ENCODE measurements at regions of chr6 and their contacts with region 1.

Region 1: DNA sequence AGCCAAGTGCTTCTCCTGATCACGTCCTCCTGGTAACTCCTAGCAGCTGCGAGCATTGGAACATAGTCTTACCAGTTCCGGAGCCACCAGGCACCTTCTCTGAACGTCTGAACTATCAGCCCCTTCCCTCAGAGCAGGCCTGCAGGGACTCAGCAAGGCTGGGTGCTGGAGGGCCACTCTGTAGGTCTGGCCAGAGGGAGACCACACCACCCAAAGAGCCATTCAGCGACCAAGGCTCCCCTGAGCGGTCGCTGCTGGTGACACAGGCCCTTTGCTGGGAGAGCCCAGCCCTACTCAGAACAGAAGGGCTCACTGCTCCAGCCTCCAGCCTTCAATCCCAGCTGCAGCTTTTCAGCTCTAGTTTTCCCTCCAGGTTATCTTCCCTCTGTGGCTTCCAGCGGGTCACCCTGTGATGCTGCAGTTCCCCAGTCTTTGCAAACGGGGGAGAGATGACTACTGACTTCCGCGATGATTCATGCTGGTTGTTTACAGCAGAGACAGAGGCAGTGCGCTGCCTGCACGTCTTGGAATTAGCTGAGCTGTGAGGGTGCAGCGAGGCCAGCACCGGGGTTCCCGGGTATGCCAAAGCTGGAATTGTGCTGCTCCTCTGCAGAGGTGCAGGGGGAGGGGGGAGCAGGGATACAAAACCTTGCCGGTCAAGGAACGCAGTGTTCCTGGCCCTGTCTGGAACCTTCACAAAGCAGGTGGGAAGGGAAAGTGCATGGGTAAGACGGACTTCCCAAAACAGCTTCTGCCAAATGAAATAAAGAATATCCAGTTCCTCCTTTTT is 161.4 kb downstream of the LY86 start:
- DNase-seq: peak; percentile 68 to 90
- ATAC-seq: peak; percentile 69 to 80 (median 73)
- H3K4me3 ChIP-seq: peak overlapping the region; percentile 56
- H3K27ac ChIP-seq: peak overlapping the region; percentile 95
- H3K4me1 ChIP-seq: peaks cover 49% of the 10 kb centered on the region
- H3K27me3 ChIP-seq: no peaks in the 10 kb centered on the region
- CTCF ChIP-seq: no peak

Region 2: DNA sequence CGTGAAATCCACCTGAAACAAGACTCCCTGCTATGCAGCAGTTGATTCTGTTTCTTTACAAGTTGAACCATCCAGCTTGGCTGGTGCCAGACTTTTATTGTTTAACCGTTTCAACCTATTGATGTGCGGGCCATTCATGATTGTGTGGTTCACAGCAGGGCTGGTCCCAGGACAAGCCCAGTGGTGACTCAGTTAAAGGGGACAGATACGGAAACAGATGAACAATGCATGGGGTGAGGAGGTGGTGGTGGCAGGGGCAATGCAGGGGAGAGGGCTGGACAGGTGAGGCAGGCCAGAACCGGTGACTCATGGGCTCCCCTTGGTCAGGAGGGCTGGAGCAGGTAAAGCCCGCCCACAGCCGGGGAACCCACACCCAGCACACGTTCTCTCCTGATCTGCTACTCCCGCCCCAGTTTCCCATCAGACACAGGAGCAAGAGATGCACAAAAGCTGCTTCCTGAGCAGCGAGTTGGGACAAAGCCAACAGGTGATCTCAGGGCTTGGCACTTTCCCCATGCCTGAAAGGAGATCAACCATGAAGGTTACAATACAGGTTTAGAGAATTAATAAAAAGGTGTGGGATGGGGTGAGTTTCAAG is 70.8 kb after region 1 on chr6:
- intact Hi-C with region 1: loop called (anchors 5 kb)
- DNase-seq: no peak
- ATAC-seq: no peak
- H3K4me3 ChIP-seq: no peak overlapping the region
- H3K27ac ChIP-seq: no peak overlapping the region
- H3K4me1 ChIP-seq: peaks cover 16% of the 10 kb centered on the region
- H3K27me3 ChIP-seq: no peaks in the 10 kb centered on the region
- CTCF ChIP-seq: no peak

Region 3: DNA sequence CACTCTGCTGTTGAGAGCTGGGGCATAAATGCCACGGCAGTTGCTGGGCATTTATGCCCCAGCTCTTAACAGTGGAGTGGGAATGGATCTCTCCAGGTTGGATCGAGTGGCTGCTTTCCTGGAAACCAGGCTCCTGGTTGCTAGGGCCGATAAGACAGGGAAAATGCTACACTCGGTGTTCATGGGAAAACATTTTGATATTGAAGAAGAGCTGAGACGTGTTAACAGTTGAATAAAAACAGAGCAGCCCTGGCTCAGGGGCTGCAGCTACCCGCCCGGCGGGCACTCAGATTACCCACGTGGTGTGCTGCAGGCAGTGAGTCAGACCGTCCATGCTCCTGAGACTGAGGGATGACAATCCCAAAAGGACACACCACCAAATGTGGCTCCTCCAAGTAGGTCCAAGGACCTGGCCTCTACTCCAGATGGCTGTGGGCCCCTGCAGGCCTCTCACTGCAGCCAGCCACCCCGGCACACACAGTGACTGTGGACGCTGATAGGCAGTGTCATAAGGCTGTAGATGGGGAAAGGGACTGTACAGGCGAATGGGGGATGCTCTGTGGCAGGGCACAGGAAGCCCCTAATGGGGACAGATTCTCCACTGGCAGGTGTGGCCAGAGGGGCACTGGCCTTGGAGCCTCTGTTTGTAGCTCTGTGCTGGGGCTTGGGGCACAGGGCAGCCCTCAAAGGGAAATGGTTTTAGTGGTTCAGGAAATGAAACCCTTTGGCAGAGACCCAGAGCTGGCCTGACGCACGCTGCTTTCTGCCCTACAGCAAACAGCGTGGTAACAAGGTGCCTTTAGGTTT is 76.4 kb after region 1 on chr6:
- intact Hi-C with region 1: loop called (anchors 5 kb)
- DNase-seq: peak; percentile 66 to 89
- ATAC-seq: peak; percentile 88 to 92 (median 88)
- H3K4me3 ChIP-seq: peak overlapping the region; percentile 40
- H3K27ac ChIP-seq: peak overlapping the region; percentile 98
- H3K4me1 ChIP-seq: peaks cover 27% of the 10 kb centered on the region
- H3K27me3 ChIP-seq: no peaks in the 10 kb centered on the region
- CTCF ChIP-seq: no peak

Region 4: DNA sequence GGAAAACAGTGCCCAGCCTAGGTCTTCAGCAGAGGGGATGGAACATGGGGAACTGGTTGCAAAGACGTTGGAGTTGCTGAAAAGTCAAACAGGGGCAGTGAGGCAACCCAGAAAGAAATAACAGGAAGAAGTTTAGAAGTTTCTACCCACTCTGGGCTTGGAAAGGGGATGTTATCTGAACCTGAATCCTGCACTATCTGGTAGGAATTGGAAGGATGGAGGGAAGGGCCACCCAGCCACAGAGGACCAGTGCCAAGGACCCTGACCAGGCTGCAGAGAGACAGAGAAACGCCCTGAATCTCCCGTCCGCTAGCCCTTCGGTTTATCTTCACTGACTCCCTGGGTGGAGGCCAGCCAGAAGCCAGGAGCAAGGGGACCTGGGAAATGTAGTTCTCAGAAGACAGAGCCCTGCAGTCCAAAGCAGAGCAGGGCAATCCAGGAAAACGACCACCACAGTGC is 140.5 kb after region 1 on chr6:
- intact Hi-C with region 1: loop called (anchors 2 to 5 kb)
- DNase-seq: peak; percentile 54 to 76
- ATAC-seq: no peak
- H3K4me3 ChIP-seq: peak overlapping the region; percentile 7
- H3K27ac ChIP-seq: peak overlapping the region; percentile 92
- H3K4me1 ChIP-seq: peaks cover 51% of the 10 kb centered on the region
- H3K27me3 ChIP-seq: no peaks in the 10 kb centered on the region
- CTCF ChIP-seq: no peak

Region 5: GRCh38 chr6:6931071-6932025 is 181.5 kb after region 1 on chr6:
- intact Hi-C with region 1: no loop called
- DNase-seq: no peak
- ATAC-seq: no peak
- H3K4me3 ChIP-seq: no peak overlapping the region
- H3K27ac ChIP-seq: no peak overlapping the region
- H3K4me1 ChIP-seq: peaks cover 10% of the 10 kb centered on the region
- H3K27me3 ChIP-seq: no peaks in the 10 kb centered on the region
- CTCF ChIP-seq: no peak